ENCODE measurements at regions of chr5 and their contacts with region 1.

Region 1: DNA sequence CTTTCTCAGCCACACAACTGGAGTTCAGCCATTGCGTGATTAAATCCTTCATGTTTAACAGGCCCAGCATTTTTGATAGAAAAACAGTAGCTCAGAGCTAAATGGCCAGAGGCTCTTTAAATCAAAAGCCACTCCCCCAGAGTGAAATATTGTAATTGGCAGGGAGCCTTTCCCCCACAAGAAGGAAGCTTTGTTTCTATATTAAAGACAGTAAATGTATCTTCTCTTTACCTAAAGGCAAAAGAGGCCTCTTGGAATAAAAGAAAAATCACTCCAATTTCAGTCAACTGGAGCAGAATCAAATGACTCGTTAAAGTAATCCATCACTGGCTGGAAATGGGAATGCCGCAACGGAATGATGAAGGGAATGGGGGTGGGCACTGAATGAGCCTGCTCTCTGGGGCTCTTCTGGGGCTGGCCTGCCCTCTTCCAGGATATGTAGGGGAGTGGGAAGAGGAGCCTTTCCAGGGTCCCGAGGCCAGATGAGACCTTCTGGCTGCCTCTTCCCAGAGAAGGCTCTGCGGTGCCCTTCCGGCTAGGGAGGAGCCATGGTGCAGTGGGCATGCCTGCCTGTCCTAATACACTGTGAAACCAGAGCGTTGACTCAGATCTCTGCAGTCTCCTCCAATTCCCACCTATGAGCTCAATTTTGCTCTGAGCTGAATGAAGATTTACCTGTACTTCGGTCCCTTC is 45.2 kb downstream of the ANKDD1B start:
- DNase-seq: no peak
- ATAC-seq: no peak
- H3K4me3 ChIP-seq: no peak overlapping the region
- H3K27ac ChIP-seq: no peak overlapping the region
- H3K4me1 ChIP-seq: peaks cover 11% of the 10 kb centered on the region; the same call in 1 of the 2 replicates
- H3K27me3 ChIP-seq: no peaks in the 10 kb centered on the region
- CTCF ChIP-seq: no peak
- EP300 ChIP-seq: no peak
- POLR2A ChIP-seq: no peak
- RAD21 ChIP-seq: no peak

Region 2: GRCh38 chr5:74772359-74772758 is 884.1 kb before region 1 on chr5:
- CTCF ChIA-PET with region 1: no interaction called
- POLR2A ChIA-PET with region 1: no interaction called
- RAD21 ChIA-PET with region 1: no interaction called
- SMC1A ChIA-PET with region 1: no interaction called
- in situ Hi-C with region 1: no loop called
- intact Hi-C with region 1: no loop called
- DNase-seq: no peak
- ATAC-seq: no peak
- H3K4me3 ChIP-seq: no peak overlapping the region
- H3K27ac ChIP-seq: no peak overlapping the region
- H3K4me1 ChIP-seq: peaks cover 6% of the 10 kb centered on the region
- H3K27me3 ChIP-seq: no peaks in the 10 kb centered on the region
- CTCF ChIP-seq: no peak
- EP300 ChIP-seq: no peak
- POLR2A ChIP-seq: no peak
- RAD21 ChIP-seq: no peak

Region 3: GRCh38 chr5:75566710-75567309 is 89.6 kb before region 1 on chr5:
- CTCF ChIA-PET with region 1: no interaction called
- POLR2A ChIA-PET with region 1: no interaction called
- RAD21 ChIA-PET with region 1: interaction called, 19 read pairs
- SMC1A ChIA-PET with region 1: interaction called, 5 read pairs
- in situ Hi-C with region 1: no loop called
- intact Hi-C with region 1: no loop called
- DNase-seq: peak; percentile 92
- ATAC-seq: peak; percentile 86
- H3K4me3 ChIP-seq: peak overlapping the region; percentile 29; the same call in 1 of the 2 replicates
- H3K27ac ChIP-seq: peak overlapping the region; percentile 96
- H3K4me1 ChIP-seq: peaks cover 36% of the 10 kb centered on the region
- H3K27me3 ChIP-seq: no peaks in the 10 kb centered on the region
- CTCF ChIP-seq: no peak
- EP300 ChIP-seq: peak; percentile 18 to 86; a peak in 2 of 4 replicates
- POLR2A ChIP-seq: no peak
- RAD21 ChIP-seq: peak; percentile 16; the same call in 1 of the 2 replicates

Region 4: GRCh38 chr5:75574791-75575190 is 81.7 kb before region 1 on chr5:
- CTCF ChIA-PET with region 1: no interaction called
- POLR2A ChIA-PET with region 1: interaction called, 3 read pairs
- RAD21 ChIA-PET with region 1: interaction called, 7 read pairs
- SMC1A ChIA-PET with region 1: interaction called, 15 read pairs
- in situ Hi-C with region 1: no loop called
- intact Hi-C with region 1: no loop called
- DNase-seq: no peak
- ATAC-seq: no peak; the same call in 2 of the 3 replicates
- H3K4me3 ChIP-seq: peak overlapping the region; percentile 40; the same call in 1 of the 2 replicates
- H3K27ac ChIP-seq: peak overlapping the region; percentile 84
- H3K4me1 ChIP-seq: peaks cover 15% of the 10 kb centered on the region
- H3K27me3 ChIP-seq: no peaks in the 10 kb centered on the region
- CTCF ChIP-seq: no peak
- EP300 ChIP-seq: no peak
- POLR2A ChIP-seq: no peak
- RAD21 ChIP-seq: no peak

Region 5: DNA sequence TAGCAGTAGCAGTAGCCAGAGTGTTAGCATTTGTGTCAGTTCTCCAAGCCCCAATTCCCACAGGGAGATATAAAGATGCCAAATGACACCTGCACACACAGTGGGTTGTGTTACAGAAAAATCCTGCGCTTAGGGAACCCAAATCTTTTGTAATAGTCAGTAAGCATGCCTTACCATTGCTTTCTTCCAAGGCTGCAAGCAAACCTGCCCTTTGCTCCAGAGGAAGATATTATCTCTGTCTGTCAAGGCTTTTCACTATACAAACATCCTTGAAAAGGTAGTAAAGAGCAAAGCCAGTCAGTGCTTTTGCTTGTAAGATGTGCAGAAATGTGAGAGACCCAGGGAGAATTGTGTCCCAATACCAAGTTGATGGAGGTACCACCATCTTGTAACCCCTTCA is 42.3 kb before region 1 on chr5:
- CTCF ChIA-PET with region 1: no interaction called
- POLR2A ChIA-PET with region 1: no interaction called
- RAD21 ChIA-PET with region 1: no interaction called
- SMC1A ChIA-PET with region 1: interaction called, 5 read pairs
- in situ Hi-C with region 1: no loop called
- intact Hi-C with region 1: loop called (anchors 1 kb)
- DNase-seq: no peak
- ATAC-seq: no peak
- H3K4me3 ChIP-seq: no peak overlapping the region
- H3K27ac ChIP-seq: no peak overlapping the region
- H3K4me1 ChIP-seq: no peaks in the 10 kb centered on the region
- H3K27me3 ChIP-seq: no peaks in the 10 kb centered on the region
- CTCF ChIP-seq: no peak
- EP300 ChIP-seq: no peak
- POLR2A ChIP-seq: no peak
- RAD21 ChIP-seq: no peak

Measured in GM12878 (cell line).